Adrenal gland (tissue), 19 donors: ENCODE measurements at regions of chr12 and their contacts with region 1.

Region 1: GRCh38 chr12:99170037-99170436 is 477.5 kb upstream of the GARIN6 start:
- DNase-seq: no peak
- H3K4me3 ChIP-seq: no peak overlapping the region
- H3K27ac ChIP-seq: no peak overlapping the region
- H3K4me1 ChIP-seq: no peaks in the 10 kb centered on the region
- H3K27me3 ChIP-seq: no peaks in the 10 kb centered on the region
- CTCF ChIP-seq: no peak
- POLR2A ChIP-seq: no peak

Region 2: DNA sequence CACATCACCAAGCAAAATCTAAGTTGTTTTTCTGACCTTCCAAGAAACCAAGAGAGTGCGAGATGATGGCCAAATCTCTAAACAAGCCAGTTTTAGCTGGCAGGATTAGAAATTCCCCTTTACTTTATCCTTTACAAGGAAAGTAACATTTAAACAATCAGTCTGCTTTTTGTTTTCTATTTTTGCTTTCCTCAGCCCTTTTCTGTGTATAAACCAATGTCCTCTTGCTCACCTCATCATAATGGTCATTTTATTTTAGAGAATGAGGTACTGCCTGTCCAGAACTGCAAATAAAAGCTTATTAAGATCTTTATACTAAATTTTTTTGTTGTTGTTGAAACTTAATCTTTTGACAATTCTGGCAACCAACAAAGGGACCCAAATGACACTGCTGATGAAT is 35.1 kb after region 1 on chr12:
- intact Hi-C with region 1: loop called in 1 of 2 experiments (anchors 2 kb)
- DNase-seq: no peak
- H3K4me3 ChIP-seq: no peak overlapping the region
- H3K27ac ChIP-seq: no peak overlapping the region
- H3K4me1 ChIP-seq: no peaks in the 10 kb centered on the region
- H3K27me3 ChIP-seq: no peaks in the 10 kb centered on the region
- CTCF ChIP-seq: no peak
- POLR2A ChIP-seq: no peak